A673 (cell line): ENCODE measurements at regions of chr15 and their contacts with region 1.

Region 1: DNA sequence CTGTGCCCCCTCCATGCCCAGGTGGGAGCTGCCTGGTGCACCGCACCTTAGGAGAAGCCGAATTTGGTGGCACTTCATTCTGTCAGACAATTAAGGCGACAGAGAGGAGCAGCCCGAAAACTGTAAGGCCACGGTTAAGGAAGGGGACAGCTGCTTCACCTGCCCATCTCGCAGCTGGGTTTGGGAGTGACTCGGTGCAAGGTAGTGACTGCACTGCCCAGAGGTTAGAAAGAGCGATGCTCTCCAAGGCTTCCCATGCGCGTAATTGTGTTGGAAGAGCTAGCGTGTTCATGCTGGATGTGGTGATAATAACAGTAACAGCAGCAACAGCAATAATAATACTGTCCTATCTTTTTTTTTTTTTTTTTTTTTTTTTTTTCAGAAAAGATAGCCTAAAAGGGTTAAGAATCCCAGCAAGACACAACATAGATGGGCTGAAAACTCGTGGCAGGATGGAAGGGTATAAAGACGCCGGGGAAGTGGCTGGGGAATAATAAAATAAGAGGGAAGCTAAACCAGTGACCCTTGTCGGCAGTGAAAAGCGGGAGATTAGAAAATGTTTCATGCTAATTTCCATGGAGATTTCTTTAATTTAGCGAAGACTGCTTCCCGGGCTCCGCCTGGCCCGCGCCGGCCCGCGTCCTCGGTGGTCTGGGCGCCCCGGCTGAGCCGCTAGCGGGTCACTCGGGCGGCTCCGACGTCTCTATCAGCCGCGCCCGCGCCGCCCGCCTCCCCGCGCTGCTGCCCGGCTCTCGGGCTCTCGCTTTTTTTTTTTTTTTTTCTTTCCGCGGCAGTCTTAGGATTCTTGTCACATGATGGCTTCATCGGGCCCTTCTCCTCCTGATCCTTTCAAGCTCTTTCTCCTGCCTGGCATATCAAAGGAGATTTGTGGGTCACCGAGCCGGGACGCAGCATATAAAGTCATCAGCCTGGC is 617.1 kb downstream of the NR2F2 start:
- DNase-seq: peak; percentile 71
- H3K4me3 ChIP-seq: peak overlapping the region; percentile 48
- H3K27ac ChIP-seq: peak overlapping the region; percentile 52
- H3K4me1 ChIP-seq: peaks cover 28% of the 10 kb centered on the region
- H3K27me3 ChIP-seq: no peaks in the 10 kb centered on the region
- CTCF ChIP-seq: no peak

Region 2: DNA sequence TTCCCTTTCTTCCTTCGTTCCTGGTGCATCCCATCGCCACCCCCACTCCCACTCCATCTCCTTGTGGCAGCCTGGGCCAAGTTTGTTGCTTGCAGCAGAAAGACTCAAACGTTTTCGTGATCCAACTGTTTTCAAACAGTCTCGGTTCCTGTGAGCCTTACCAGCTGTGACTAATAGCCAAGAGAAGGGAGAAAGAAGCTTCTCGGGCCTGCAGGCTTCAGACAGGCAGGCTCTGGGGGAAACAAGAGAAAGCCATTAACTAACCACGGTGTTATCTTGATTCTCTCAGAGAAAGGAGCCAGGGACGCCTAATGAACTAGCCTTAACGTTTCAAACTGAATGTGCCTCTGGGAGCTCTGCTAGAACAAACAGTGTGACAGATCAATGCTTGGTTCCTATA is 125.0 kb after region 1 on chr15:
- CTCF ChIA-PET with region 1: no interaction called
- POLR2A ChIA-PET with region 1: no interaction called
- intact Hi-C with region 1: loop called (anchors 5 kb)
- DNase-seq: no peak
- H3K4me3 ChIP-seq: no peak overlapping the region
- H3K27ac ChIP-seq: peak overlapping the region; percentile 72
- H3K4me1 ChIP-seq: peaks cover 56% of the 10 kb centered on the region
- H3K27me3 ChIP-seq: no peaks in the 10 kb centered on the region
- CTCF ChIP-seq: no peak

Region 3: DNA sequence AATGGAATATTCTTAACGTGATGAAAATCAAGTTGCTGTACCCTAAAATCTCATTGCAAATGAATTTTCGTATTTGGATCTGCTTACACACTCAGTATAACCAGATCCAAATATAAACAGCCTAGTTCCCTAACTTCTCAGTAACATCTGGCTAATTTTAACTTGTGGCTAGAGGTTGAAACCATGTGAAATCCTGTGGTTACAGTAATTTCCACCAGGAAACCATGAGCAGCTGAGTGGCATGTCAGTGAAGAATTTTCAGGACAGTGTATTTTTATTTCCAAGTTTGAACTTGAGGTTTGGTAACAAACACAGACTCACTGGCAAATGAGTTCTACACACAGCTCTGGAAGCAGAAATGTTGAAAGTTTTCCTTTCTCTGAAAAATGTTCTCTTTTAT is 137.1 kb after region 1 on chr15:
- CTCF ChIA-PET with region 1: no interaction called
- POLR2A ChIA-PET with region 1: interaction called, 10 read pairs
- intact Hi-C with region 1: no loop called
- DNase-seq: peak; percentile 61
- H3K4me3 ChIP-seq: no peak overlapping the region
- H3K27ac ChIP-seq: peak overlapping the region; percentile 84
- H3K4me1 ChIP-seq: peaks cover 95% of the 10 kb centered on the region
- H3K27me3 ChIP-seq: no peaks in the 10 kb centered on the region
- CTCF ChIP-seq: no peak

Region 4: GRCh38 chr15:97490429-97490828 is 542.9 kb after region 1 on chr15:
- CTCF ChIA-PET with region 1: no interaction called
- POLR2A ChIA-PET with region 1: no interaction called
- intact Hi-C with region 1: no loop called
- DNase-seq: no peak
- H3K4me3 ChIP-seq: no peak overlapping the region
- H3K27ac ChIP-seq: no peak overlapping the region
- H3K4me1 ChIP-seq: no peaks in the 10 kb centered on the region
- H3K27me3 ChIP-seq: no peaks in the 10 kb centered on the region
- CTCF ChIP-seq: no peak